ENCODE measurements at regions of chr4 and their contacts with region 1.

Region 1: DNA sequence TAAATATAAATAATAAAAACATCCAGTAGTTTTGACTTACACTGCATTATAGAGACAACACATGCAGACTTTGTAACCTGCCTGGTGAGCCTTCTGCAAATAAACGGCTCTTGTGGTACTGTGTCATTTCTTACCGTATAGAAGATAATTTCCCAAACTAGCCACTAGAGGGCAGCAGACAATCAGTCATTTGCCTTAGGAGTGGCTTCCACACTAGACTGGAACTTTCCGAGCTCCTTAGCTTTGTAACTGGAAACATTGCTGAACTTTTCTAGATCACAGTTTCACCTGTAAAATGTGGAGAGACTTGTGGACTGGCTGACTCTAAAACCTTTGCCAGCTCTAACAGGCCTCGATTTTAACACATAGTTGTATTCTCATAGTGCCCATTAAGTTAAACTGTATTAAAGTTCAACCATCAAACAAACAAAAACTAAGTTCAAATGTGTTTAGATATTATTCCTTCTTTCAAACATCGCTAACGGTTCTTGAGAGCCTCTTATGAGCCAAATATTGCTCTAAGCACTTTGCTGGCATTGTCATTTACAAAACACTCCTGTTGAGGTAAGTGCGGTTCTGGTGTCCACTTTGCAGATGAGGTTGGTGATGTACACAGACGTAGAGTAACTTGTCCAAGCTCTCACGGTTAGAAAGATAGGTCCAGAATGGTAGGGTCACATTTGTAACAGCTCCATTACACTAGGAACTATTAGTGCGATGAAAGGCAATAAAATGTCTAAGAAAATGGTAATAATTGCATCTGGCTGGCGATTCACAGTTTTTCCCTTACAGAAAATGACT is 345.5 kb downstream of the ANK2 start:
- DNase-seq: peak; percentile 77
- H3K4me3 ChIP-seq: no peak overlapping the region
- H3K27ac ChIP-seq: no peak overlapping the region
- H3K4me1 ChIP-seq: no peaks in the 10 kb centered on the region
- H3K27me3 ChIP-seq: no peaks in the 10 kb centered on the region
- CTCF ChIP-seq: peak; percentile 82

Region 2: GRCh38 chr4:113248320-113248719 is 146.6 kb before region 1 on chr4:
- intact Hi-C with region 1: no loop called
- DNase-seq: no peak
- H3K4me3 ChIP-seq: no peak overlapping the region
- H3K27ac ChIP-seq: no peak overlapping the region
- H3K4me1 ChIP-seq: no peaks in the 10 kb centered on the region
- H3K27me3 ChIP-seq: no peaks in the 10 kb centered on the region
- CTCF ChIP-seq: no peak

Region 3: GRCh38 chr4:113761620-113762185 is 366.8 kb after region 1 on chr4 and contains the start of gene CAMK2D:
- intact Hi-C with region 1: loop called (anchors 5 kb)
- DNase-seq: peak; percentile 91
- H3K4me3 ChIP-seq: peak within 1 kb of the TSS; percentile 78
- H3K27ac ChIP-seq: peak within 1 kb of the TSS; percentile 100
- H3K4me1 ChIP-seq: no peaks in the 10 kb centered on the region
- H3K27me3 ChIP-seq: no peaks in the 10 kb centered on the region
- CTCF ChIP-seq: peak; percentile 34
- total RNA-seq, gene CAMK2D: 69.5 to 109 TPM

Region 4: DNA sequence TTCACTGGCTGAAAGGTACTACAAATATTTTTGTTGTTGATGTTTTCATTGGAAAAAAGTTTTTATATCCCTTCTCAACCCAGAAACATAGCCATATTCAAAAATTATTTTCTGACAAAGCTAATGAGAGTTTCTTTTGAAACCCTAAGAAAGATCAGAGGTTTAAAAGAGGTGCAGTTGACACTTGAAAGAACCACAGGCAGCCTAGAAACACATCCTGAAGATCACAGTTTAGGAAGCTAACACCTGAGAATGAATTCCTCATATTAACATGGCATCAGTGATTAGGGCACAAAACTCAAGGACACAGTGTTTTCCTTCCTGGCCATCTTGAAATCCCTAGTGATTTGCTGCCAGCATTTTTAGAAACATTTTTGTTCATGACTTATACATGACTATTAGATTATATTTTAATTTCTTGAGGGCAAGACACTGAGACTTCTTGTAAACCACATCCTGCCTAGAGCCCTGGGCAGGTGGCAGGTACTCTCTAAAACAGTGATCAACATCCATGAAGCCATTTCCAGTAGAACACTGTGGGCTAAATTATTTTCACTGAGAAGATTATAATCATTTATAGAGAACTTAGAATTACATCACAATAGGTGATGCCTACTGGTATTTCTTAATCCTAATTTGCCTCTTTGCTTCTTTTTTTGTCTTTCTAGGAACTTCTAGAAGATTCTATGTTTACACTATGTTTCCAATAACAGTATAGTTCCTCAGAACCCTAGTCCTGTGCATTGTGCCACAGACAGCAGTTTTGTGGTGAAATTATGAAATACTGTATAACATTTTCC is 504.5 kb after region 1 on chr4:
- intact Hi-C with region 1: loop called (anchors 10 kb)
- DNase-seq: no peak
- H3K4me3 ChIP-seq: no peak overlapping the region
- H3K27ac ChIP-seq: no peak overlapping the region
- H3K4me1 ChIP-seq: no peaks in the 10 kb centered on the region
- H3K27me3 ChIP-seq: no peaks in the 10 kb centered on the region
- CTCF ChIP-seq: no peak

Region 5: DNA sequence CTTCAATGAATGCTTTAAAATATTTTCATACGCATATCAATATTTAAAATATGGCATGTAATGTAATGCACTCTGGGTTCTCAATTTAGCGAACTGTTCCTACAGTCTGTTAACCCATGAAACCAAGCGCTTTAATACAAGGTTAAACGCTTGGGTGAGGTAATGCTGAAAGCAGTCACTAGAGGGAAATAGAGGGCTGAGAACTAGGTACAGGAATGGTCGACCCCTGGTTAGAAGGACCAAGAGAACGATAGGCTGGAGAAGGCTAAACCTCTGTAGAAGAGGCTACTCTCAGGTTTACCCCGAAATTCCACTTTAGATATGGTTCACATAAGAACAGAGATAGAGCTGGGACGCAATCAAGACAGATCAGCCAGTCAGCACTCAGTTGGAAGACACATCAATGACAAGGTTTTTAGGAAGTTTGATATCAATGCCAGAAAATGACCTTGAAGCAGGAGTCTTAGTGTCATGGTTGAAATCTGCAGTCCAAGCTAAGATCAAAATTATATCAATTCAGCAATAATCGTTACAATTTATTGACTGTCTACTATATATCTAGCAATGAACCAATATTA is 557.6 kb after region 1 on chr4:
- intact Hi-C with region 1: loop called (anchors 10 kb)
- DNase-seq: peak; percentile 55
- H3K4me3 ChIP-seq: no peak overlapping the region
- H3K27ac ChIP-seq: no peak overlapping the region
- H3K4me1 ChIP-seq: peaks cover 11% of the 10 kb centered on the region
- H3K27me3 ChIP-seq: no peaks in the 10 kb centered on the region
- CTCF ChIP-seq: peak; percentile 70

Region 6: DNA sequence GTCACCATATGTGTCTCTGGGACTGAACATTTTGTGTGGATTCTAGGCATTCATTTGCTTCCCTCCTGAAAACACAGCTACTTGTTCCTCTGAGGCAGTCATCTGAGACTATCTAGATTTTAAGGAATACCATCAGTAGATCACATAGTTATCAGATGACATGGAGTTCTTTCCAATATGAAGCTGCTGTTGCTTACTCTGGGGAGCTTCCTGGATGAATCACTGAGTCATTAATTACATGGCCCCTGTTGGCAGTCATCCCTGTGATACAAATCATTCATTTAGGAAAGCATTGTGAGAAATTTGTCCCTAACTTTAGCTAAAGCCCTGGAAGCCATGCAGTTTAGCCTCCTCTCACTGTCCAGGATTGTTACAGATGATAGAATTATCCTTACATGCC is 682.7 kb after region 1 on chr4:
- intact Hi-C with region 1: loop called (anchors 10 kb)
- DNase-seq: no peak
- H3K4me3 ChIP-seq: no peak overlapping the region
- H3K27ac ChIP-seq: no peak overlapping the region
- H3K4me1 ChIP-seq: no peaks in the 10 kb centered on the region
- H3K27me3 ChIP-seq: no peaks in the 10 kb centered on the region
- CTCF ChIP-seq: no peak

Region 7: GRCh38 chr4:114399105-114399504 is 1004.2 kb after region 1 on chr4:
- intact Hi-C with region 1: no loop called
- DNase-seq: no peak
- H3K4me3 ChIP-seq: no peak overlapping the region
- H3K27ac ChIP-seq: no peak overlapping the region
- H3K4me1 ChIP-seq: no peaks in the 10 kb centered on the region
- H3K27me3 ChIP-seq: no peaks in the 10 kb centered on the region
- CTCF ChIP-seq: no peak

Measured in colonic mucosa (tissue), 4 donors.